ENCODE measurements at regions of chr11 and their contacts with region 1.

Region 1: GRCh38 chr11:13955971-13956421 is 6.5 kb upstream of the SPON1 start:
- DNase-seq: peak in 1 of 2 donors; percentile 74
- H3K4me3 ChIP-seq: no peak overlapping the region
- H3K27ac ChIP-seq: no peak overlapping the region
- H3K4me1 ChIP-seq: no peaks in the 10 kb centered on the region
- H3K27me3 ChIP-seq: peaks cover 7% of the 10 kb centered on the region
- CTCF ChIP-seq: peak; percentile 79 to 91 (median 79)

Region 2: GRCh38 chr11:13999704-14000103 is 43.7 kb after region 1 on chr11:
- intact Hi-C with region 1: no loop called
- DNase-seq: no peak
- H3K4me3 ChIP-seq: no peak overlapping the region
- H3K27ac ChIP-seq: no peak overlapping the region
- H3K4me1 ChIP-seq: no peaks in the 10 kb centered on the region
- H3K27me3 ChIP-seq: no peaks in the 10 kb centered on the region
- CTCF ChIP-seq: no peak

Region 3: GRCh38 chr11:14249121-14249963 is 293.3 kb after region 1 on chr11:
- intact Hi-C with region 1: loop called (anchors 1 kb)
- DNase-seq: peak in 1 of 2 donors; percentile 73
- H3K4me3 ChIP-seq: no peak overlapping the region
- H3K27ac ChIP-seq: no peak overlapping the region
- H3K4me1 ChIP-seq: no peaks in the 10 kb centered on the region
- H3K27me3 ChIP-seq: no peaks in the 10 kb centered on the region
- CTCF ChIP-seq: peak; percentile 71 to 92 (median 82)